Activated naive CD4-positive, alpha-beta T cell treated with anti-CD3 and anti-CD28 coated beads for 36 hours (primary cell): ENCODE measurements at regions of chr3 and their contacts with region 1.

Region 1: GRCh38 chr3:52278510-52279069 is at the start of gene WDR82:
- DNase-seq: peak; percentile 98
- H3K4me3 Mint-ChIP-seq: peak within 1 kb of the TSS; percentile 95
- H3K27ac Mint-ChIP-seq: peak within 1 kb of the TSS; percentile 98
- H3K4me1 Mint-ChIP-seq: peaks cover 57% of the 10 kb centered on the region
- H3K27me3 Mint-ChIP-seq: no peaks in the 10 kb centered on the region
- total RNA-seq, gene WDR82: 176 to 177 TPM

Region 2: GRCh38 chr3:51879937-51880336 is 398.7 kb before region 1 on chr3:
- CTCF ChIA-PET with region 1: no interaction called
- intact Hi-C with region 1: no loop called
- DNase-seq: no peak
- H3K4me3 Mint-ChIP-seq: no peak overlapping the region
- H3K27ac Mint-ChIP-seq: no peak overlapping the region
- H3K4me1 Mint-ChIP-seq: no peaks in the 10 kb centered on the region
- H3K27me3 Mint-ChIP-seq: peaks cover 3% of the 10 kb centered on the region

Region 3: GRCh38 chr3:51896607-51897305 is 381.8 kb before region 1 on chr3:
- CTCF ChIA-PET with region 1: no interaction called
- intact Hi-C with region 1: no loop called
- DNase-seq: no peak
- H3K4me3 Mint-ChIP-seq: no peak overlapping the region
- H3K27ac Mint-ChIP-seq: no peak overlapping the region
- H3K4me1 Mint-ChIP-seq: peaks cover 2% of the 10 kb centered on the region
- H3K27me3 Mint-ChIP-seq: peaks cover 20% of the 10 kb centered on the region

Region 4: GRCh38 chr3:52154117-52155094 is 124.2 kb before region 1 on chr3 and contains the start of gene POC1A:
- CTCF ChIA-PET with region 1: no interaction called
- intact Hi-C with region 1: loop called (anchors 2 kb)
- DNase-seq: peak; percentile 96
- H3K4me3 Mint-ChIP-seq: peak within 1 kb of the TSS; percentile 91
- H3K27ac Mint-ChIP-seq: peak within 1 kb of the TSS; percentile 92
- H3K4me1 Mint-ChIP-seq: peaks cover 18% of the 10 kb centered on the region
- H3K27me3 Mint-ChIP-seq: no peaks in the 10 kb centered on the region
- total RNA-seq, gene POC1A: 32.3 to 32.7 TPM

Region 5: GRCh38 chr3:52231502-52232293 is 46.9 kb before region 1 on chr3:
- CTCF ChIA-PET with region 1: interaction called, 69 read pairs
- intact Hi-C with region 1: no loop called
- DNase-seq: peak; percentile 89
- H3K4me3 Mint-ChIP-seq: no peak overlapping the region
- H3K27ac Mint-ChIP-seq: peak overlapping the region; percentile 88
- H3K4me1 Mint-ChIP-seq: peaks cover 45% of the 10 kb centered on the region
- H3K27me3 Mint-ChIP-seq: no peaks in the 10 kb centered on the region

Region 6: GRCh38 chr3:52245322-52246263 is 33.0 kb before region 1 on chr3 and contains the start of gene PPM1M:
- CTCF ChIA-PET with region 1: interaction called, 61 read pairs
- intact Hi-C with region 1: loop called (anchors 1 kb)
- DNase-seq: peak; percentile 54
- H3K4me3 Mint-ChIP-seq: peak within 1 kb of the TSS; percentile 79
- H3K27ac Mint-ChIP-seq: peak within 1 kb of the TSS; percentile 90
- H3K4me1 Mint-ChIP-seq: peaks cover 81% of the 10 kb centered on the region
- H3K27me3 Mint-ChIP-seq: no peaks in the 10 kb centered on the region
- total RNA-seq, gene PPM1M: 107 to 108 TPM

Region 7: GRCh38 chr3:52259035-52259434 is 19.6 kb before region 1 on chr3:
- CTCF ChIA-PET with region 1: interaction called, 17 read pairs
- intact Hi-C with region 1: no loop called
- DNase-seq: no peak
- H3K4me3 Mint-ChIP-seq: no peak overlapping the region
- H3K27ac Mint-ChIP-seq: peak overlapping the region; percentile 62
- H3K4me1 Mint-ChIP-seq: peaks cover 95% of the 10 kb centered on the region
- H3K27me3 Mint-ChIP-seq: no peaks in the 10 kb centered on the region

Region 8: DNA sequence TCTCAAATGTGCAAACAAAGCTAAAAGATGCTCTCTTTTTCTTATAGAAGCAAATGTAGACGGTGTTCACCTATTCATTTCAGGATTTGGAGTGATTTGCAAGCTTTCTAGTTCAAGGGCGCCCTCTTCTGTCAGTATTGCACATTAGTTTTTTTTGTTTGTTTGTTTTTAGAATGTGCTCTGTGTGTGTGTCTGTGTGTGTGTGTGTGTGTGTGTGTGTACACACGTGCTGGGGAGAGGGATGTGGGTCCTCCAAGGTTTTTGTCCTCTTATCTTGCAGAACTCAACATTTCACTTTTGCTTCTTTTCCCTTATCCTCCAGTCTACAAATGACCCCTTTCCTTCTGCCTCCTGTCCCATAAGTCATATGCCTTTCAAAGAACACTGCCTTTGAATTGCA is 61.0 kb after region 1 on chr3:
- CTCF ChIA-PET with region 1: interaction called, 26 read pairs
- intact Hi-C with region 1: no loop called
- DNase-seq: peak; percentile 64
- H3K4me3 Mint-ChIP-seq: no peak overlapping the region
- H3K27ac Mint-ChIP-seq: no peak overlapping the region
- H3K4me1 Mint-ChIP-seq: peaks cover 3% of the 10 kb centered on the region
- H3K27me3 Mint-ChIP-seq: no peaks in the 10 kb centered on the region

Region 9: DNA sequence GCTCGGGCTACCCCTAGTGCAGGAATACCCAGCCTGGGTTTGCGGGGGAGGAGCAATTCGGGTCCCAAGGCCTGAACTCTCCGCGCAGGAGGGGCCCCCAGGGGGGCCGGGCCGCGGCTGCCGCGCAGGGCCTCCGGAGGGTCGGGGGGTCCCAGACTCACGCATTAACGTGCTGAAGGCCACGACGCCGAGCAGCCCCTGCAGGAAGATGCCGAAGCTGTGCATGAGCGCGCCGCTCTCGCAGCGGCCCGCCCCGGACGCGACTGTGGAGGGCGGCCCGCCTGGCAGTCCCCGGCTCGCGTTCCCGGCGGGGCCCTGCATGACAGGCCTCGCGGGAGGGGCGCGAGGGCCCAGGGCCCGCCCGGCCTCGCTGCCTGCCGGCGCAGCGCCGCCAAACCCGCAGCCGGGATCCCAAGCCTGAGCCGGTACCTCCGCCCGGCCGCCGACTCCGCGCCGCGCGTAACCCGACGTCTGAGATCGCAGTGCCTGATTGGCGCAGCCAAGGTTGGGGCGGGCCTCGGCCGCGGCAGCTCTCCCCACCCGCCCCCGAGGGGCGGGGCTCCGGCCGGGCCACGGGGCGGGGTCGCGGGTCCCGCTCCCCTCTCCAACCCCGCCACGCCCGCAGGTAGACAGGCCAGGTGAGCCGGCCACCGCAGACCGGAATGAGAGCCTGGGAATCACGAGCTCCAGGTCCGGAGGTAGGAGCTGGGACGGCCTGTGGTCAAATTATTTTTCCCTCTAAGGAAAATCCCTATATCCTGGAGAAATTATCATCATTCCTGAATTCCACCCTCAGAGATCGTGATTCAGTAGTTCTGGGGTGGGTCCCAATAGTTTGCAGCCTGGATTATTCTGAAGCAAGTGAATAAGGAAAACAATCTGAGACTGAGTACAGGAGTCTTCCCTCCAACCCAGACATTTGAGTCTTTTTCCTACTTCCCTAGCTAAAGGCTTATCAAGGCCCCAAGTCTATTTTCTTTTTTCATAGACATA is 618.8 kb after region 1 on chr3 and contains the start of gene STIMATE:
- CTCF ChIA-PET with region 1: no interaction called
- intact Hi-C with region 1: loop called (anchors 10 kb)
- DNase-seq: peak; percentile 86
- H3K4me3 Mint-ChIP-seq: peak within 1 kb of the TSS; percentile 84
- H3K27ac Mint-ChIP-seq: no peak within 1 kb of the TSS
- H3K4me1 Mint-ChIP-seq: peaks cover 39% of the 10 kb centered on the region
- H3K27me3 Mint-ChIP-seq: no peaks in the 10 kb centered on the region
- total RNA-seq, gene STIMATE: 7.7 to 9.7 TPM

Region 10: DNA sequence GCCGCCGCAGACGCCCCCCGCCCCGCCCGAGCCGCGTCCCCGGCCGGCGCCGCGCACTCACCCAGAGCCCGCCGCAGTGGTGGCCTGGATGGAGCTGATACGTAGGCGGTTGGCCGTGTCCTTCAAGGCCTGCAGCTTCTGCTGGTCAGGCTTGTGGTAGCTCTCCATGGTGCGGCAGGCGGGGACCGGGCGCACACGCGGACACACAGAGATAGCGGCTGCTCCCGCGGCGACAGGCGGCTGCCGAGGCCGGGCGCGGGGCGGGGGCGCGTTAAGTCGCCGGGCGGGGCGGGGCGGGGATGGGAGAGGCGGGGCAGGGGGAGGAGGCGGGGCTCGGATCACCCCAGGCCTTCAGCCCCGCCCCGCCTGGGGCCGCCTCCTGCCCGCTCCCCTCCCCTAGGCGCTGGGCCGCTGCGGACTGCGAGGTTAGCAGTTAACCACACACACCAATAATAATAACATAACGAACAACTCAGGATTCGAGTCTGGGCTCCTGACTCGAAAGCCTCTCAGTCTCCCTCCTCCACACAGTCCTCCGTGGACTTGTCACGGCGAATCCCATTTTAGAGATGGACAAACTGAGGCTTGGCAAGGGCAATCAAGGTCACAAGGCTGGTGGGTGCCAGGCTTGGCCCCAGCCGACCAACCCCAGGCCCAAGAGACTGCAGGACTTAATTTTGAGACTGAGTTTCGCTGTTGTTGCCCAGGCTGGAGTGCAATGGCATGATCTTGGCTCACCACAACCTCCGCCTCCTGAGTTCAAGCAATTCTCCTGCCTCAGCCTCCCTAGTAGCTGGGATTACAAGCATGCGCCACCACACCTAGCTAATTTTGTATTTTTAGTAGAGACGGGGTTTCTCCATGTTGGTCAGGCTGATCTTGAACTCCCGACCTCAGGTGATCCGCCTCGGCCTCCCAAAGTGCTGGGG is 977.4 kb after region 1 on chr3 and contains the start of gene TKT:
- CTCF ChIA-PET with region 1: no interaction called
- intact Hi-C with region 1: no loop called
- DNase-seq: peak; percentile 85
- H3K4me3 Mint-ChIP-seq: peak within 1 kb of the TSS; percentile 91
- H3K27ac Mint-ChIP-seq: peak within 1 kb of the TSS; percentile 80
- H3K4me1 Mint-ChIP-seq: peaks cover 36% of the 10 kb centered on the region
- H3K27me3 Mint-ChIP-seq: no peaks in the 10 kb centered on the region
- total RNA-seq, gene TKT: 316 to 322 TPM